ENCODE measurements at regions of chr4 and their contacts with region 1.

Region 1: GRCh38 chr4:6763981-6764380 is 18.5 kb upstream of the KIAA0232 start:
- DNase-seq: no peak
- H3K4me3 ChIP-seq: no peak overlapping the region
- H3K4me3 Mint-ChIP-seq: no peak overlapping the region
- H3K27ac Mint-ChIP-seq: no peak overlapping the region
- H3K4me1 ChIP-seq: peaks cover 1% of the 10 kb centered on the region
- H3K4me1 Mint-ChIP-seq: peaks cover 5% of the 10 kb centered on the region
- H3K27me3 ChIP-seq: no peaks in the 10 kb centered on the region
- H3K27me3 Mint-ChIP-seq: no peaks in the 10 kb centered on the region
- CTCF ChIP-seq: no peak

Region 2: DNA sequence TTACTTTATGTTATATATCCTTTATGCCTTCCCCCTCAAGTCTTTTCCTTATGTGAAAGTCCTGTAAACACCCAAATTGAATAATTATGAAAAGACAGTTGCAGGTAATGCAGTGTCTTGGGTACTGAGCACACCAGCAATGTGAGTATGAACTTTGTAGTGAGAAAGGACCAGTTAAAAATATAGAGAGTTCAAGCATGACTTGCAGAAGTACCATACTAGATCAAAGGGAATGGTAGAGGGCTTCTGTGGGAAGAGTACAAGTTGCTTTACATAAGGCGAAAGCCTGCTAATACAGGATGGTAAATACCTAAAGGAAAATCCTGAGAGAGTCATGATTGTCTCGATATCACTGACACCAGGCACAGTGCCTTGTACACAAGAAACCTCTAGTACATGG is 44.3 kb after region 1 on chr4:
- CTCF ChIA-PET with region 1: no interaction called
- POLR2A ChIA-PET with region 1: no interaction called
- intact Hi-C with region 1: loop called (anchors 1 kb)
- DNase-seq: no peak
- H3K4me3 ChIP-seq: no peak overlapping the region
- H3K4me3 Mint-ChIP-seq: no peak overlapping the region
- H3K27ac Mint-ChIP-seq: no peak overlapping the region
- H3K4me1 ChIP-seq: peaks cover 2% of the 10 kb centered on the region; the same call in 1 of the 2 replicates
- H3K4me1 Mint-ChIP-seq: peaks cover 20% of the 10 kb centered on the region
- H3K27me3 ChIP-seq: no peaks in the 10 kb centered on the region
- H3K27me3 Mint-ChIP-seq: no peaks in the 10 kb centered on the region
- CTCF ChIP-seq: no peak

Measured in Caco-2 (cell line).